ENCODE measurements at regions of chr5 and their contacts with region 1.

Region 1: DNA sequence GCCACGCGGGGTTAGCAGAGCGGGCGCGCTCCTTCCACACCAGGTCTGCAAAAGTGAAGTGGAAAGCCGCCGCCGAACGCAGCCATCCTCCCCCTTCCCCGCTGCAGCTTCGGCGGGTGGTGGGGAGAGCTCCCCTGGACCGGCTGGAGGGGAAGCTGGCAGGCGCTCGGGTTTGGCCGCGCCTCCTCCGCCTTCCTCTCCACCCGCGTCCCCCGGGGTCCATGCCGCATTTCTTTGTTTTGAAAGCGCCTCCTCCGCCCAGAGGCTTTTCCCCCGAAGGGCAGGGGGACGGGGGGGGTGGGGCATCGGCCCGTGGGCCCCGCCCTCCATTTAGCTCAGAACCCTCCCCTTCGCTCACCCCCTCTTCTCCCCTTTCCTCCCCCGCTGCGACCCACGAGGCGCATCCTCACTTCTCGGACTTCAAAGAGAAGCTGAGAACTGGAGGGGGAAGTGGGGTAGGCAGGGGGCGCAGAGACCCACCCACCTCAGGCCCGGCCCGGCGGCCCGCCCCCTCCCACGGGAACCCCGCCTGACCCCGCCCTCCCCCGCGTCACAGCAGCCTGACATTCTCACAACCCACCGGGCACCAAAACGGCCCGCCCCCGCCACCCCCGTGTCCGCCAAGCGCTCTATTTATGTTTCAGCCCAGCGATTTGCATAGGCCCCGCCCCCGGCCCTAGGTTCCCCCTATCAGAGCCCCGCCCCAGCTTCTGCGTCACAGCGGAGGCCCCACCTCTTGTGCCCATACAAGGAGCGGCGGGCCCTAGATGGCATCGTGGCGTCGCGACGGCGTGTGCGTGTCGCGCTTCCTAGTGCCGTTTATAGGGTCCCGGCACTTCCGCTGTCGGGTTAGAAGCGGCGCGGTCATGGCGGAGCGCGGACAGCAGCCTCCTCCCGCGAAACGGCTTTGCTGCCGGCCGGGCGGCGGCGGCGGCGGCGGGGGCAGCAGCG is at the start of gene ZSWIM6:
- DNase-seq: peak; percentile 98 to 100
- H3K4me3 ChIP-seq: peak within 1 kb of the TSS; percentile 94 to 99
- H3K27ac ChIP-seq: peak within 1 kb of the TSS; percentile 96 to 98
- H3K4me1 ChIP-seq: peaks cover 0 to 18% of the 10 kb centered on the region in 2 donors
- H3K27me3 ChIP-seq: no peaks in the 10 kb centered on the region
- CTCF ChIP-seq: no peak
- total RNA-seq, gene ZSWIM6: 8.8 TPM

Region 2: GRCh38 chr5:60366489-60366888 is 965.2 kb before region 1 on chr5:
- intact Hi-C with region 1: no loop called
- DNase-seq: peak in 1 of 2 donors; percentile 65
- H3K4me3 ChIP-seq: no peak overlapping the region
- H3K27ac ChIP-seq: no peak overlapping the region
- H3K4me1 ChIP-seq: peaks cover 0 to 3% of the 10 kb centered on the region in 2 donors
- H3K27me3 ChIP-seq: no peaks in the 10 kb centered on the region
- CTCF ChIP-seq: no peak

Region 3: DNA sequence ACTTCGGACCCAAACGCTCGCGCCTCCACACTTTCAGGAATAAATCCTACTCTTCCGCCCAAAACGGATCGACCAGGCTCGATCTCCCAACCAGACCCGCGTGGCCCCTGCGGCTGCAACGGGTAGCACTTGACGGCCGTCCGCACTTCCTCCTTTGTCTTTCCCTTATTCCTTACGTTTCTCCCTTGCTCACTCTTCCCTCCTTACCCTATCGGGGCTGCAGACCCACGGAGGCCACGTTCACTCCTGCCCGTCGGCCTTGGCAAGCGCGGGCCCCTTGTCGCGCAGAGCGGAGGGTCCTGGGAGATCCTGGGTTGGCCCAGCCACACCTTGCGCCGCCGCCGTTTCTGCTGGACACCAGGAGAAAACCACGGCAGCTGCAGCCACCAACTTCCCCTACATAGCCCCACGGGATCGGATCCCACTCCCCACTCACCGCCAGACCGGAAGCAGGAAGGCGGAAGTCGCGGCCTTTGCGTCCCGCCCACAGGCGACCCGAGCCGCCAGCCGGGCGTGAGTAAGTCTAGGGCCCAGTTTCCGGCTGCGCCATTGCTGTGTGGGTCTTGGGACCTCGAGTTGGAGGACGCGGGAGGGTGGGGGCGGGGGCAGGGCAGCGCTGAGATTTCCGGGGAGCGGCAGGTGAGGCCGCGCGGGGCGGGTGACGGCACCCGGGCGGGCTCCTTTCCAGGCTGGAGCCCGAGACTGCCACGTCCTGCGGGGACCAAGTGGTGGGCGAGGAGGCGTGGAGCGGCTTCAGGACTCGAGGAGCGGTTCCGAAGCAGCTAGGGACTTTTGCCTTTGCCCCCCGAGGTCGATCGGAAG is 169.5 kb before region 1 on chr5 and contains the start of gene SMIM15:
- intact Hi-C with region 1: loop called (anchors 1 kb)
- DNase-seq: peak; percentile 53 to 93
- H3K4me3 ChIP-seq: peak within 1 kb of the TSS; percentile 85 to 86
- H3K27ac ChIP-seq: peak within 1 kb of the TSS; percentile 85 to 91
- H3K4me1 ChIP-seq: peaks cover 0 to 6% of the 10 kb centered on the region in 2 donors
- H3K27me3 ChIP-seq: no peaks in the 10 kb centered on the region
- CTCF ChIP-seq: no peak
- total RNA-seq, gene SMIM15: 22.4 TPM

Region 4: DNA sequence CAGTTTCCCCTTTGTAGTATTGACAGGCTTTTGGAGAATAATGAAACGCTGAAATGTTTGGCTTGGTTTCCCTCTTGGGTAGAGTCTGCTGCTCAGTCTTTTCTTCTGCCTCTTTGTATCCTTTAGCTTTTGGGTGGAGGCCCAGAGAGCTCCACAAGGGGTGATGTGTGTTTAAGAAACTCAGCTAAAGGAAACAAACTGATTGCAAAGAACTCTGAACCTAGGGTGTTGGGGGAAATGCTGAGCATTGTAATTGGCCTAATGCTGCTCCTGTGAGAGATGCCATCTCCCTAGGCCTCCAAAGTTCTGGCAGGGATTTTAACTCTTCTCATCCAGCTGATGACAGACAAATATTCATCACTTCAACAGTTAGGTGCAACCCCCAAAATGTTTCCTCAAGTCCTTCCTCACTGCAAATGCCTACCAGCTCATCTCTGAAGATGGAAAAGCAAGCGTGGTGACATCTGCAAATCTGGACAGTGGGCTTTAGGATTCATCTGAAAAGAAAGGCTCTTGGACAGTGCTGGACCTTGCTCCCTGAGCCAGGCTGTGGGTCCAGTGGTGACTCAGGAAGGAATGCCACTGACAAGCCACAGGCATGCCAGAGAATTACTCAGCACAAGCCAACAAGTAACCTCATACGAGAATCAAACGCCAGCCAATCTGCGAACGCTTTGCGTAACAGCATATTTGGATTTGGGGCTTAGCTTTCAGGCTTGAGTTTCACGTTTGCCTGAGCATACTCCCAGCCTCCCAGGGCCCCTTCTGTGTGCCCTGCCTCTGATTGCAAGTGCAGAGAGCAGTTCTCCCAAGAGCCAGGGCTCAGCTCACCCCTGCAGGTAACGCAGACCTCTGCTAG is 30.1 kb before region 1 on chr5:
- intact Hi-C with region 1: loop called (anchors 1 kb)
- DNase-seq: peak; percentile 70 to 94
- H3K4me3 ChIP-seq: no peak overlapping the region
- H3K27ac ChIP-seq: peak overlapping the region; percentile 73
- H3K4me1 ChIP-seq: peaks cover 0 to 21% of the 10 kb centered on the region in 2 donors
- H3K27me3 ChIP-seq: no peaks in the 10 kb centered on the region
- CTCF ChIP-seq: peak in 1 of 3 experiments; percentile 14

Region 5: DNA sequence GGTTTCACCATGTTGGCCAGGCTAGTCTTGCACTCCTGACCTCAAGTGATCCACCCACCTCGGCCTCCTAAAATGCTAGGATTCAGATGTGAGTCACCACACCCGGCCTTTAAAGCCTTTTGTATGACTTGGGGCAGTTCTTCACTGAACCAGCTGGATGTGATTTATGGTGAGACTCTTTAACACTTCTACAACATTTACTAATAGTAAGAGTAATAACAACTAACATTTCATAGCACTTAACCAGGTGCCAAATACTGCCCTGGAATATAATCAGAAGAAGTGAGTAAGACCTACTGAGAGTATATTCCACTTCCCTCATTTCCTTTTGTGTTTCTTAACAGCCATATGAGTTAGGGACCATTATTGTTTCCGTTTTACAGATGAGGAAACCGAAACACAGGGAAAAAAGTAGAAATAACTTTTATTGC is 10.4 kb after region 1 on chr5:
- intact Hi-C with region 1: no loop called
- DNase-seq: no peak
- H3K4me3 ChIP-seq: no peak overlapping the region
- H3K27ac ChIP-seq: no peak overlapping the region
- H3K4me1 ChIP-seq: peaks cover 2 to 3% of the 10 kb centered on the region in 2 donors
- H3K27me3 ChIP-seq: no peaks in the 10 kb centered on the region
- CTCF ChIP-seq: no peak

Region 6: GRCh38 chr5:61408476-61409168 is 76.9 kb after region 1 on chr5:
- intact Hi-C with region 1: loop called (anchors 1 kb)
- DNase-seq: peak; percentile 99 to 100
- H3K4me3 ChIP-seq: peak overlapping the region in 1 of 2 donors; percentile 31
- H3K27ac ChIP-seq: peak overlapping the region; percentile 26 to 43
- H3K4me1 ChIP-seq: peaks cover 6 to 14% of the 10 kb centered on the region in 2 donors
- H3K27me3 ChIP-seq: no peaks in the 10 kb centered on the region
- CTCF ChIP-seq: no peak

Region 7: DNA sequence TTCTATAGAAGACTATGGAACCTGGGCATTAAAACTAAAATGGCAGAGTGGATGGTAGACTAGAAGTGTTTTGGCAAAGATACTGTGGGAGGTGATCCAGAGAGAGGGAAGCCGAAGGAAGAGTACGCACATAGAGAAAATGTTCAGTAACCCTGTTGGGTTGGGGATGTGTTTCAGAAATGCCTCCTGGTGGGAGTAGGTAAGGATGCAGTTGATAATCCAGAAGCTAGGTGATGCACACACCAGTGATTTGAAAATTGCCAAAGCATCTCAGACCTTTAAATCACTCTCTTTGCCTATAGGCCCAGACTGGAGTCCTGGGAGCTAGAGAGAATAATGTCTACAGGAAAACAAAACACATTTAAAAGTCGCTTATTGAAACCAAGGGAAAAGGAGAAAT is 177.6 kb after region 1 on chr5:
- intact Hi-C with region 1: no loop called
- DNase-seq: no peak
- H3K4me3 ChIP-seq: no peak overlapping the region
- H3K27ac ChIP-seq: no peak overlapping the region
- H3K4me1 ChIP-seq: no peaks in the 10 kb centered on the region
- H3K27me3 ChIP-seq: no peaks in the 10 kb centered on the region
- CTCF ChIP-seq: no peak

Region 8: GRCh38 chr5:61625681-61626621 is 294.3 kb after region 1 on chr5:
- intact Hi-C with region 1: loop called (anchors 2 kb)
- DNase-seq: peak; percentile 29 to 83
- H3K4me3 ChIP-seq: peak overlapping the region; percentile 64 to 86
- H3K27ac ChIP-seq: peak overlapping the region; percentile 83 to 84
- H3K4me1 ChIP-seq: peaks cover 8 to 10% of the 10 kb centered on the region in 2 donors
- H3K27me3 ChIP-seq: no peaks in the 10 kb centered on the region
- CTCF ChIP-seq: no peak